IMR-90 (cell line): ENCODE measurements at regions of chr12 and their contacts with region 1.

Region 1: GRCh38 chr12:116277393-116278278 is at the start of gene MED13L:
- DNase-seq: peak; percentile 78
- ATAC-seq: peak; percentile 95
- H3K4me3 ChIP-seq: peak within 1 kb of the TSS; percentile 58
- H3K27ac ChIP-seq: peak within 1 kb of the TSS; percentile 91
- H3K4me1 ChIP-seq: 0 out of 2 replicates have a peak, but pooled peaks cover 1% of the 10 kb centered on the region
- H3K27me3 ChIP-seq: no peaks in the 10 kb centered on the region
- CTCF ChIP-seq: peak; percentile 49
- POLR2A ChIP-seq: peak; percentile 57; the same call in 1 of the 2 replicates
- RAD21 ChIP-seq: peak; percentile 66
- total RNA-seq, gene MED13L: 49.1 and 93.3 TPM in 2 replicates

Region 2: DNA sequence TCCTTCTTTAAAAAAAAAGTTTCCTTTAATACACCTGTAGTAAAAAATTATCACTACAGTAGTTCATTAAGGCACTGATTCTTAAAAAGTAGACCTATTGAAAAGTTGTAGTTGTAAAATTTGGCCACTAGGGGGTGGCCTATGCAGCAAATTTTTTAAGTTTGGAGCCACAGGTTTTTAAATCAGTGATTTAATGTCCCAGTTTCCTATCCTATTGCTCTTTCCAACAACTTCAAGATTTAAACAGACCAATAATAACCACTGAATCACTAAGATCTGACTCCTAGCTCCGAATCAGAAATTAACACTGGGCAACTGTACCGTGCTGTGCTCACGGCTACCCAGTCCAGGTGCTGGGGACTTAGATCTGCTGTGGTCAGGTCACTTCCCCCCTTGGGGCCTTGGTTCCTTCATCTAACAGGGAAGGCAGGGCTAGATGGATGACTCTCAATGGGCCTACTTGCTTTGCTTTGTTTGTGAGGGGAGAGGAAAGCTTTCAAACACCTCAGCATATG is 279.5 kb before region 1 on chr12:
- CTCF ChIA-PET with region 1: no interaction called
- POLR2A ChIA-PET with region 1: no interaction called
- dilution Hi-C with region 1: no loop called
- in situ Hi-C with region 1: no loop called
- intact Hi-C with region 1: loop called (anchors 5 kb)
- DNase-seq: peak; percentile 72
- ATAC-seq: peak; percentile 85
- H3K4me3 ChIP-seq: no peak overlapping the region
- H3K27ac ChIP-seq: no peak overlapping the region
- H3K4me1 ChIP-seq: peaks cover 5% of the 10 kb centered on the region
- H3K27me3 ChIP-seq: no peaks in the 10 kb centered on the region
- CTCF ChIP-seq: peak; percentile 74
- POLR2A ChIP-seq: no peak
- RAD21 ChIP-seq: peak; percentile 73

Region 3: GRCh38 chr12:116142936-116143898 is 134.4 kb before region 1 on chr12:
- CTCF ChIA-PET with region 1: interaction called, 5 read pairs
- POLR2A ChIA-PET with region 1: no interaction called
- dilution Hi-C with region 1: no loop called
- in situ Hi-C with region 1: no loop called
- intact Hi-C with region 1: loop called (anchors 5 kb)
- DNase-seq: peak; percentile 89
- ATAC-seq: peak; percentile 68
- H3K4me3 ChIP-seq: no peak overlapping the region
- H3K27ac ChIP-seq: no peak overlapping the region
- H3K4me1 ChIP-seq: peaks cover 15% of the 10 kb centered on the region
- H3K27me3 ChIP-seq: no peaks in the 10 kb centered on the region
- CTCF ChIP-seq: no peak
- POLR2A ChIP-seq: no peak
- RAD21 ChIP-seq: no peak

Region 4: GRCh38 chr12:116303929-116304328 is 26.3 kb after region 1 on chr12:
- CTCF ChIA-PET with region 1: no interaction called
- POLR2A ChIA-PET with region 1: no interaction called
- dilution Hi-C with region 1: no loop called
- in situ Hi-C with region 1: no loop called
- intact Hi-C with region 1: no loop called
- DNase-seq: peak; percentile 50
- ATAC-seq: peak; percentile 66
- H3K4me3 ChIP-seq: no peak overlapping the region
- H3K27ac ChIP-seq: no peak overlapping the region
- H3K4me1 ChIP-seq: peaks cover 9% of the 10 kb centered on the region; the same call in 1 of the 2 replicates
- H3K27me3 ChIP-seq: no peaks in the 10 kb centered on the region
- CTCF ChIP-seq: no peak
- POLR2A ChIP-seq: no peak
- RAD21 ChIP-seq: no peak

Region 5: GRCh38 chr12:116406516-116406915 is 128.9 kb after region 1 on chr12:
- CTCF ChIA-PET with region 1: no interaction called
- POLR2A ChIA-PET with region 1: no interaction called
- dilution Hi-C with region 1: no loop called
- in situ Hi-C with region 1: no loop called
- intact Hi-C with region 1: no loop called
- DNase-seq: peak; percentile 55
- ATAC-seq: peak; percentile 61
- H3K4me3 ChIP-seq: no peak overlapping the region
- H3K27ac ChIP-seq: no peak overlapping the region
- H3K4me1 ChIP-seq: peaks cover 8% of the 10 kb centered on the region
- H3K27me3 ChIP-seq: no peaks in the 10 kb centered on the region
- CTCF ChIP-seq: no peak
- POLR2A ChIP-seq: no peak
- RAD21 ChIP-seq: no peak

Region 6: GRCh38 chr12:116426391-116427136 is 148.9 kb after region 1 on chr12:
- CTCF ChIA-PET with region 1: interaction called, 3 read pairs
- POLR2A ChIA-PET with region 1: no interaction called
- dilution Hi-C with region 1: no loop called
- in situ Hi-C with region 1: no loop called
- intact Hi-C with region 1: loop called (anchors 1 kb)
- DNase-seq: peak; percentile 98
- ATAC-seq: peak; percentile 95
- H3K4me3 ChIP-seq: no peak overlapping the region
- H3K27ac ChIP-seq: peak overlapping the region; percentile 64
- H3K4me1 ChIP-seq: peaks cover 12% of the 10 kb centered on the region
- H3K27me3 ChIP-seq: no peaks in the 10 kb centered on the region
- CTCF ChIP-seq: peak; percentile 63
- POLR2A ChIP-seq: 0 out of 2 replicates have a peak, but pooled peaks have one; percentile 33
- RAD21 ChIP-seq: peak; percentile 76

Region 7: DNA sequence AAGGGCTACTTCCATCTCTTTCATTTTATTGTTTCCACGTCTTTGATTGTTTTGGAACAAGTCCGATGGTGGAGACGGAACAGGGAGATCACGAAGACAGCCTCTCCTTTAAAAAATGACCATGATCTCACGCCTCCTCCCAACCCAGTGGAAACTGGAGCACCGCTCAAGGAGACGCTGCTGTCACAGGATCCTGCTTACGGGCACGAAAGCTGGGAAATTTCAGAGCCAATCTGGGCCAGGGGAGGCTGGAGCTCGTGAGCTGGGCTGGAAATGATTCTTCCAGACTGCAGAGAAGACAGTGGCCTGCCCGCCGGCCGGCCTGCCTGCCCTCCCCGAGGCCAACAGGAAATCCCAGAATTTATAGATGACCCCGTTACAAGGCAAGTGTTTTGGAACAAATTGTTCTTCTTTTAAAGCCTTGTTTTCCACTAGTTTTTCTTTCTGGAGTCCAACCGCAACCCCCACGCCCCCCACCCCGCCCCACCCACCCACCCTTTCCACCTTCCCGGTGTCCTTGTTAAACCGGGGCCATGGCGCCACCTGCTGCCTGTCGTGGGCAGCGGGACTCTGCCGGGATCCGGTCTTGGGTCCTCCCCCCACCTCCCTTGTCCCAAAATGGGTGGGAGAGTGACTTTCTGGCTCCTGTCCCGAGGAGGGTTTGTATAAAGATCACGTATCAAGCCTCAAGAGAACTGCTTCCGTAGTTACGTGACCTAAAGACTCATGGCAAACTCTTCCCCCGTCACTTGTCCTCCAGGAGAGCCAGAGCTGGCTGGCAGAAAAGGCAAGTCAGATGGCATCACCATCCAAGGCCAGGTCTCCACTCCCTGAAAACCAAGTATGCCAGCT is 321.9 kb after region 1 on chr12:
- CTCF ChIA-PET with region 1: no interaction called
- POLR2A ChIA-PET with region 1: no interaction called
- dilution Hi-C with region 1: no loop called
- in situ Hi-C with region 1: loop called (anchors 10 kb)
- intact Hi-C with region 1: loop called (anchors 1 kb)
- DNase-seq: peak; percentile 58
- ATAC-seq: peak; percentile 93
- H3K4me3 ChIP-seq: no peak overlapping the region
- H3K27ac ChIP-seq: peak overlapping the region; percentile 61
- H3K4me1 ChIP-seq: peaks cover 11% of the 10 kb centered on the region
- H3K27me3 ChIP-seq: no peaks in the 10 kb centered on the region; the same call in 1 of the 2 replicates
- CTCF ChIP-seq: peak; percentile 61
- POLR2A ChIP-seq: no peak
- RAD21 ChIP-seq: peak; percentile 64